ENCODE measurements at regions of chr3 and their contacts with region 1.

Region 1: GRCh38 chr3:53347261-53348064 is at the start of gene DCP1A:
- DNase-seq: peak; percentile 73 to 98
- H3K4me3 ChIP-seq: peak within 1 kb of the TSS; percentile 74 to 99
- H3K27ac ChIP-seq: peak within 1 kb of the TSS; percentile 97 to 99
- H3K4me1 ChIP-seq: peaks cover 0 to 4% of the 10 kb centered on the region in 2 donors
- H3K27me3 ChIP-seq: no peaks in the 10 kb centered on the region
- CTCF ChIP-seq: no peak
- total RNA-seq, gene DCP1A: 21.7 TPM

Region 2: DNA sequence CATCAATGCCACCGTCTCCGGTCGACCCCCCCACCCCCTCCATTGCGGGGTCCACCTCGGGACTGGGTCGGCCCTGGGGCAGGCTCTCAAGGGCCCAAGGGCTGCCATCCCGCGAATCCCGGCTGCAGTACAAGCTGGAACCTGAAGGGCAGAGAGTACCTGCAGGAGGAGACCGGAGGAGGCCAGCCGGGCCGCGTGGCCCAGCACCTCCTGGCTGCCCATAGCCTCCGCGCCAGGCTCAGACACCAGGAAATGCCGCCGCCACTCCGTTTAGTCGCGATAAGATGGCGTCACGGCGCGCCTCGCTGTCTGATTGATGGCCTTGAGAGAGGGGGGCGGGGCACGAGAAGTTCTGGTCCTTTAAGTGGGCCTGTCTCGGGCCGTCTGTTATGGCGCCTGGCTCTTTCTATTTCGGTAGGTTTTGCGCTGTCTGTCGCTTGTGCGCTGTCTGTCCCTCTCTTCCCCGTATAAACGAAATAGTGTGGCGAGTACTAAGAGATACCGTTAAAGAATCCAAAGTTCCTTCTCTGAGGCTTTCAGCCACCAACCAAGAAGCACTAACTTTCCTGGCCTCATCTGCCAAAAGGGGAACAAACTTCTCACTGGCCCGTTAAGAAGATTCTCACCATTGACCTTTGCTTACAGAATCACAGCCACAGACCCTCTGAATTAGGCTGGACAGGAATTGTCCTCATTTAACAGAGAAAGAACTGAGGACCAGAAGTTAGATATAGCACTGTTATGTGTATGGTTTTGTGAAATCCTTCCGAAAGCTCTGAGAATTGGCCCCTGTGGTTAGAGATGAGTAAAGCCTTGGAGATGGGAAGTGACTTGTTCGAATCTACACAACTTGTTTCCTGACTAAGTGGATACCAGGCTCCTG is 217.0 kb before region 1 on chr3 and contains the start of gene RFT1:
- intact Hi-C with region 1: loop called (anchors 10 kb)
- DNase-seq: peak; percentile 96 to 100
- H3K4me3 ChIP-seq: peak within 1 kb of the TSS; percentile 93 to 96
- H3K27ac ChIP-seq: peak within 1 kb of the TSS; percentile 81 to 93
- H3K4me1 ChIP-seq: peaks cover 3 to 12% of the 10 kb centered on the region in 2 donors
- H3K27me3 ChIP-seq: no peaks in the 10 kb centered on the region
- CTCF ChIP-seq: peak in 1 of 3 experiments; percentile 27
- total RNA-seq, gene RFT1: 12.1 TPM

Region 3: DNA sequence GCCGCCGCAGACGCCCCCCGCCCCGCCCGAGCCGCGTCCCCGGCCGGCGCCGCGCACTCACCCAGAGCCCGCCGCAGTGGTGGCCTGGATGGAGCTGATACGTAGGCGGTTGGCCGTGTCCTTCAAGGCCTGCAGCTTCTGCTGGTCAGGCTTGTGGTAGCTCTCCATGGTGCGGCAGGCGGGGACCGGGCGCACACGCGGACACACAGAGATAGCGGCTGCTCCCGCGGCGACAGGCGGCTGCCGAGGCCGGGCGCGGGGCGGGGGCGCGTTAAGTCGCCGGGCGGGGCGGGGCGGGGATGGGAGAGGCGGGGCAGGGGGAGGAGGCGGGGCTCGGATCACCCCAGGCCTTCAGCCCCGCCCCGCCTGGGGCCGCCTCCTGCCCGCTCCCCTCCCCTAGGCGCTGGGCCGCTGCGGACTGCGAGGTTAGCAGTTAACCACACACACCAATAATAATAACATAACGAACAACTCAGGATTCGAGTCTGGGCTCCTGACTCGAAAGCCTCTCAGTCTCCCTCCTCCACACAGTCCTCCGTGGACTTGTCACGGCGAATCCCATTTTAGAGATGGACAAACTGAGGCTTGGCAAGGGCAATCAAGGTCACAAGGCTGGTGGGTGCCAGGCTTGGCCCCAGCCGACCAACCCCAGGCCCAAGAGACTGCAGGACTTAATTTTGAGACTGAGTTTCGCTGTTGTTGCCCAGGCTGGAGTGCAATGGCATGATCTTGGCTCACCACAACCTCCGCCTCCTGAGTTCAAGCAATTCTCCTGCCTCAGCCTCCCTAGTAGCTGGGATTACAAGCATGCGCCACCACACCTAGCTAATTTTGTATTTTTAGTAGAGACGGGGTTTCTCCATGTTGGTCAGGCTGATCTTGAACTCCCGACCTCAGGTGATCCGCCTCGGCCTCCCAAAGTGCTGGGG is 91.4 kb before region 1 on chr3 and contains the start of gene TKT:
- intact Hi-C with region 1: loop called (anchors 1 kb)
- DNase-seq: peak; percentile 22 to 92
- H3K4me3 ChIP-seq: peak within 1 kb of the TSS; percentile 63 to 87
- H3K27ac ChIP-seq: peak within 1 kb of the TSS; percentile 73 to 81
- H3K4me1 ChIP-seq: peaks cover 0 to 34% of the 10 kb centered on the region in 2 donors
- H3K27me3 ChIP-seq: no peaks in the 10 kb centered on the region
- CTCF ChIP-seq: no peak
- total RNA-seq, gene TKT: 219 TPM

Region 4: DNA sequence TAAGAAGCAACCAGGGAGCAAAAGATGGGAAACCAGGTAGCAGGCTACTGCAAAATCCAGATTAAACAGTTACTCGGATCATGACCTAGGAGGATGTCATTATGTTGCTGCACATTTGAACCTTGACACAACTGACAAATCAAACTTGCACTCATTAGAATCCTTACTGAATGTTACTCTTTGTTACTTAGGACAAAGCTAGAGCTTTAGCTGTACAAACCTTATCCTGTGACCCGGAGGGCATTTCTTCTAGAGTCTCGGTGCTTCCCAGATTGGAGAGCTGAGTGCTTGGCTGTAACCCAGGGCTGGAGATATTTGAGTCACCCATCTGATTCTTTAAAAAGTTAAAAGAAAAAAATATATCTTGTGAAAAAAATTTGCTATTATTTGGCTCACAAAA is 43.5 kb before region 1 on chr3:
- intact Hi-C with region 1: loop called (anchors 5 kb)
- DNase-seq: no peak
- H3K4me3 ChIP-seq: no peak overlapping the region
- H3K27ac ChIP-seq: peak overlapping the region in 1 of 2 donors; percentile 22
- H3K4me1 ChIP-seq: peaks cover 0 to 8% of the 10 kb centered on the region in 2 donors
- H3K27me3 ChIP-seq: no peaks in the 10 kb centered on the region
- CTCF ChIP-seq: no peak

Region 5: DNA sequence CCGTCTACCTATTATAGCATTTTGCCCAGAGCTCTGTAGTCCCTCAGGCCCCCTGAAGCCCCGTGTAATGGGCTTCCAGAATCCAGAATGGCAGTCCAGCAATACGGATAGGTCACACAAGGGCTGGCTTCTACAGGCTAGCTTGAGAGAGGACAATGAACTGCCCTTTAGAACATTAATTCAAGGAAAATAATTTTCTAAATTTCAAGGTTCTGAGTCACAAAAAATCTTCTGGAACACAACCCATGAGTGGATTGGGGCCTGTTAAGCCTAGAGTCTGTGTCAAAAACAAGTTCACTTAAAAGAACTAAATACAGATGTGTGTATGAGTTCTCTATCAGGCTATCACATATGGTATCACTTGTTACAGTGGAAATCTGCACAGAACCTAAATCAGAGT is 28.9 kb before region 1 on chr3:
- intact Hi-C with region 1: loop called (anchors 2 kb)
- DNase-seq: no peak
- H3K4me3 ChIP-seq: no peak overlapping the region
- H3K27ac ChIP-seq: peak overlapping the region in 1 of 2 donors; percentile 20
- H3K4me1 ChIP-seq: peaks cover 0 to 22% of the 10 kb centered on the region in 2 donors
- H3K27me3 ChIP-seq: no peaks in the 10 kb centered on the region
- CTCF ChIP-seq: no peak

Region 6: DNA sequence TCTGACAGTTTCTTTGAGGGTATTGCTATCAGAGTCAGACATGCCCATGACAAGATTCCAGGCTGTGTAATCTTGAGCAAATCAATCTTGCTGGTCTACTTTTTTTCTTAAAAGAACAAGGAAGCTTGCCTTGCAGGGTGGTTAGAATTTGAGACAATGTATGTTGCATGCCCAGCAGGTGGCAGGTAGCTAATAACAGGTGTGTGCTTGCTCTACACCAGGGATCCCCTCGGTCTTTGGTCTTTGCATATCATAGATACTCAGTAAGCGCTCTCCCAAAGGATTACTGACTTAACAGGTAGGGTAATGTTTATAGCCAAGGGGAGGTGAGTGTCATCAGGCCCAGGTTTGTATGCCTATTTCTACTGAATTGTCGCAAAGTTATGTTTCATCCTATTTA is 184.3 kb after region 1 on chr3:
- intact Hi-C with region 1: no loop called
- DNase-seq: no peak
- H3K4me3 ChIP-seq: no peak overlapping the region
- H3K27ac ChIP-seq: no peak overlapping the region
- H3K4me1 ChIP-seq: no peaks in the 10 kb centered on the region
- H3K27me3 ChIP-seq: no peaks in the 10 kb centered on the region
- CTCF ChIP-seq: no peak

Region 7: DNA sequence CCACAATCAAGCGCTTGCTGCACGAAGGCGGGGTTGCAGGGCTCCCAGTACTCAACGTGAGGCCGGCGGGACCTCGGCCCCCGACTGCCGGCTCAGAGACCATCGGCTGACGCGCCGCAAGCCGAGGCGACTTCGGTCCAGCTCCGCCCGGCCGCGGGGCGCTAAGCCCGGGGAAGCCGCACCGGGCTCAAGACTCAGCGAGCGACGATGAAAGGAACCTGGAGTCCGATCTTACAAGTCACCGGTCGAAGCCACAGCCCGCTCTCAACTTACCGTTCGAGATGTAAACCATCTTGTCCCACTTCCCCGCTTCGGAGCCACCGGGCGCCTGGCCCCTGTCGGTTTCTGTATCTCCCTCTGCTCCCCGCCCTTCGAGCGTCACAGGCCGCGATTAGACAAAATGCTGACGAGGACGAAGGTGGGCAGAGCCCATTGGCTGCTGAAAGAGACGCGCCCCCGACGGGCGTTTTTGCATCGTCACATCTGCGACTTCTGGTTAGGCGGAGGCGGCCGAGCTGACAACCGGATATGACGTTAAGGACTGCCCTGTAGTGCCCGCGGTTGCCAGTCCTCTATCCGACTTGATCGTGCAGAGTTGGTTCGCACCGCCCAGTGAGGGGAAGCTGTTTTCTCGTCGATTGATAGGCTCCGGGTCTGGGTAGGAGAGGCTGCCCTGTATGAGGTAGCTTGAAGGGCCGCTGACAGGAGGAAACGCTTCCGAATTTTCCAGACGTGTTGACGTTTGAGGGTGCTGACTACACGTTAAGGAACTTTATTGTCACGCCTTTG is 544.2 kb after region 1 on chr3 and contains the start of gene SELENOK:
- intact Hi-C with region 1: loop called (anchors 5 kb)
- DNase-seq: peak; percentile 98 to 100
- H3K4me3 ChIP-seq: peak within 1 kb of the TSS; percentile 82 to 87
- H3K27ac ChIP-seq: peak within 1 kb of the TSS; percentile 79 to 98
- H3K4me1 ChIP-seq: peaks cover 3 to 16% of the 10 kb centered on the region in 2 donors
- H3K27me3 ChIP-seq: no peaks in the 10 kb centered on the region
- CTCF ChIP-seq: no peak
- total RNA-seq, gene SELENOK: 18.7 TPM